ENCODE measurements at regions of chr11 and their contacts with region 1.

Region 1: DNA sequence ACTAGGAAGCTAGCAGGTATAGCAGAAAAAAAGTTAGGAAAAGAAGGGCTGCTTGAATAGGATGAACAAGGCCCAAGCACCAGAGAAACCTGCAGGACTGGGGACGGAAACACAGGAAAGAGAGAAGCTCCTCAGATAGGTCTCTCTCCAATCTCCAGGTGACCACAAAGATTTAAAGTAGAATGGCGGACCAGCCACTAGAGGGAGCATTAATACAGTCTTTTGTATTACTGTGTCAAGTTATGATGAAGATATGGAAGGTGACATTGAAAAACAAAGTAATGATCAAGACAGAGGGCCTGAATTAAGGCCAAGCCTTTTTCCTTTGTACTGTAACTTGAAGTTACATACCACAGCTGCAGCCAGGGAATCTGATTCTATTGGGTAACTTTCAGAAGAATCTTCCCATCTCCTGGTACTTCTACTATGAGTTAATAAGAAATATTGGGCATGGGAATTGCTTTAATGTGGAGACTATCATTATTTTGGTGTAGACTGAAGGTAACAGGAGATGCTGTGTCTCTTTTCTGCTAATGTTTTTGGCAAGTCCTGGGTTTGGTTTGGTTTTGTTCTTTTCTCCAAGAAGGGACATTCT is 33.8 kb downstream of the OR2AG2 start:
- DNase-seq: peak; percentile 58
- CTCF ChIP-seq: peak; percentile 66

Region 2: GRCh38 chr11:6468712-6469495 is 269.1 kb before region 1 on chr11:
- CTCF ChIA-PET with region 1: no interaction called
- POLR2A ChIA-PET with region 1: no interaction called
- DNase-seq: peak; percentile 74
- CTCF ChIP-seq: no peak

Region 3: DNA sequence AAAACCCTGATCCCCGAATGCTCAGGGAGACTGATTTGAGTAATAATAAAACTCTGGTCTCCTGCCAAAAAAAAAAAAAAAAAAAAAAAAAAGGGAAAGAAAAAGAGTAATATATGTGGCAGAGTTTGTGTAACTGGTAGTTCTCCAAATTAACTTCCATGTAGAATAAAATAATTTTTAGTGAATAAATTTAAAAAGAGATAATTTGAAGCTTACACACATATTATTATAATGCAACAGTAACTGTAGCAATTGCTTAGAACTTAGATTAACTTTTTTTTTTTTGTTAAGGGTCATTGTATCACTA is 43.8 kb before region 1 on chr11:
- CTCF ChIA-PET with region 1: no interaction called
- POLR2A ChIA-PET with region 1: no interaction called
- DNase-seq: no peak
- CTCF ChIP-seq: no peak

Region 4: DNA sequence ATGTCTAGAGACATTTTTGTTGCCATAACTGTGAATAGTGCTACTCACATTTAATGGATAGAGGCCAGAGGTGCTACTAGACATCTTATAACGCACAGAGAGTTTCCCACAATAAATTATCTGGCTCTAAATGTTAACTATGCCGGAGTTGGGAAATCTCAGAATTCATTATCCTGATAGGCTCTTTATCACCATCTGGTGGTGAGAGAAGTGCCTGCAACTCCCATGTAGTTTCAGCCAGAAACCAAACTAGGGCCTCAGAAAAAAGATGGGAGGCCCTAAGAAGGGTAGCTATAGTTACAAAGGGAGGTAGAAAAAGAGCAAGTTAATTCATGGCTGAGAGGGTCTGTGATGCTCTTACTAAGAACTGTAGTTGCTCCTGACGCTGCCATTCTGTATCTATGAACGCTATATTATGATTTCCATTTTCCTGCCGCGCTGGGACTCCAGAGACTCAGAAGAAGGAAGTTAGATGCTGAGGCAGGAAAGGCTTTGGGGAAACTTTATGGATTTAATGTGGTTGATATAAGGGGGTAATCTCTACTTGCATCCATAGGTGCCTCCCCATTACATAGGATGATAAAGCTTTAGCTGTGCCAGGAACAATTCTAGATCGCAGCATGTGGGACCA is 31.9 kb before region 1 on chr11:
- CTCF ChIA-PET with region 1: interaction called, 17 read pairs
- POLR2A ChIA-PET with region 1: no interaction called
- DNase-seq: peak; percentile 47
- CTCF ChIP-seq: peak; percentile 82

Region 5: DNA sequence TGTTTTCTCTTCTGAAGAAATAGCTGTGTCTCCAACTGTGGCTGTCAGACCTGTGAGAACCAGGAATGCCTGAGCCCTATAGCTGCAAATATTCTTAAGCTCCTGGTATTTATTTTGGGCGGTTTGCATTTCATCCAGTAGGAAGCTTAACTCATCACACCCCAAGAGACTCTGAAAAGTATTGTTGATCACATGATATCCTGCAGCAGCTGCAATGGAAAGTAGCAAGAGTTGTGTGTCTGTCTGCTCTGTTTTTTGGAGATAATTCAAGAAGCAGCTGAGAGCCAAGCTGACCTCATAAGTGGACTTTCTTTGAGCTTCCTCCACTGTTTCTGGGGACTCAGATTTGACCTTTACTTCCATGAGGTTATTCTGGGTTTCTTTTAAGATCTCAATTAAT is 18.4 kb before region 1 on chr11:
- CTCF ChIA-PET with region 1: interaction called, 81 read pairs
- POLR2A ChIA-PET with region 1: no interaction called
- DNase-seq: no peak
- CTCF ChIP-seq: no peak

Region 6: GRCh38 chr11:6771926-6772893 is 34.2 kb after region 1 on chr11 and contains the start of gene OR2AG2:
- CTCF ChIA-PET with region 1: interaction called, 13 read pairs
- POLR2A ChIA-PET with region 1: no interaction called
- DNase-seq: peak; percentile 49
- CTCF ChIP-seq: no peak

Region 7: GRCh38 chr11:6799402-6799801 is 61.4 kb after region 1 on chr11 and contains the start of gene OR6A2:
- CTCF ChIA-PET with region 1: no interaction called
- POLR2A ChIA-PET with region 1: no interaction called
- DNase-seq: no peak
- CTCF ChIP-seq: no peak